ENCODE measurements at regions of chr17 and their contacts with region 1.

Region 1: GRCh38 chr17:1516388-1517161 is at the start of gene INPP5K:
- DNase-seq: peak; percentile 97 to 99 (median 98)
- H3K4me3 ChIP-seq: peak within 1 kb of the TSS; percentile 68 to 97
- H3K4me3 Mint-ChIP-seq: peak within 1 kb of the TSS; percentile 90 to 95 (median 92)
- H3K27ac ChIP-seq: peak within 1 kb of the TSS; percentile 89
- H3K27ac Mint-ChIP-seq: peak within 1 kb of the TSS; percentile 92 to 97 (median 95)
- H3K4me1 ChIP-seq: peaks cover 26% of the 10 kb centered on the region
- H3K4me1 Mint-ChIP-seq: peaks cover 15 to 43% (median 29%) of the 10 kb centered on the region in 4 donors
- H3K27me3 ChIP-seq: no peaks in the 10 kb centered on the region
- H3K27me3 Mint-ChIP-seq: no peaks in the 10 kb centered on the region
- total RNA-seq, gene INPP5K: 73.6 to 78.5 TPM

Region 2: DNA sequence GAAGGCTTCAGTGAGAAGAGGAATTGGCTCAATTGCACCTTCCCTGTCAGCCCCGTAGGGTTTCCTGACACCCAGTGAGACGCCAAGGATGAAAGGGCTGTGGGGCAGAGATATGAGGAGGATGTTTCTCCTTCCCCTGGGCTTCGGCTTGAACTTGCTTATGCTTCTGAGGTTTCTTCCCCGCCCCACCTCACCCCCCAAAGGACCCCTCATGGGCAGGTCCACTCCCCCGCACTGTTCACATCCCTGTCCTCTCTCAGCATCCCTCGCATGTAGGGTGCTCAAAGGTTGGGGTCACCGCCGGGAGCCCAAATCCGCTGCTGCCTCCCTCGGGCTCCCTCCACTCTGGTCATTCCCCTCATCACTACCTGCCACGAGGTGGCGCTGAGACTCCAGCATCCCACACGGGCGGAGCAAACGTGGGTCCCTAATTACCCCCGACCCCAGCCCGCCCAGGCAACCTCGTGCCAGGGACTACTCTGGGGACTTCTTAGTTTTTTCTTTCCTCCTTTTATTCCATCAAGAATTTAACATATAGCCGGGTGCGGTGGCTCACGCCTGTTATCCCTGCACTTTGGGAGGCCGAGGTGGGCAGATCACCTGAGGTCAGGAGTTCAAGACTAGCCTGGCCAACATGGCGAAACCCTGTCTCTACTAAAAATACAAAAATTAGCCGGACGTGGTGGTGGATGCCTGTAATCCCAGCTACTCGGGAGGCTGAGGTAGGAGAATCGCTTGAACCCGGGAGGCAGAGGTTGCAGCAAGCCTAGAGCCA is 240.4 kb before region 1 on chr17:
- CTCF ChIA-PET with region 1: no interaction called
- POLR2A ChIA-PET with region 1: no interaction called
- intact Hi-C with region 1: loop called (anchors 1 kb)
- DNase-seq: peak; percentile 60 to 72 (median 69)
- H3K4me3 ChIP-seq: no peak overlapping the region
- H3K4me3 Mint-ChIP-seq: peak overlapping the region in 4 of 8 donors; percentile 47 to 68 (median 62)
- H3K27ac ChIP-seq: no peak overlapping the region
- H3K27ac Mint-ChIP-seq: peak overlapping the region in 3 of 7 donors; percentile 13 to 88 (median 54)
- H3K4me1 ChIP-seq: peaks cover 5% of the 10 kb centered on the region
- H3K4me1 Mint-ChIP-seq: peaks cover 0 to 8% (median 4%) of the 10 kb centered on the region in 4 donors
- H3K27me3 ChIP-seq: no peaks in the 10 kb centered on the region
- H3K27me3 Mint-ChIP-seq: peaks cover 9 to 22% of the 10 kb centered on the region in 2 donors

Region 3: DNA sequence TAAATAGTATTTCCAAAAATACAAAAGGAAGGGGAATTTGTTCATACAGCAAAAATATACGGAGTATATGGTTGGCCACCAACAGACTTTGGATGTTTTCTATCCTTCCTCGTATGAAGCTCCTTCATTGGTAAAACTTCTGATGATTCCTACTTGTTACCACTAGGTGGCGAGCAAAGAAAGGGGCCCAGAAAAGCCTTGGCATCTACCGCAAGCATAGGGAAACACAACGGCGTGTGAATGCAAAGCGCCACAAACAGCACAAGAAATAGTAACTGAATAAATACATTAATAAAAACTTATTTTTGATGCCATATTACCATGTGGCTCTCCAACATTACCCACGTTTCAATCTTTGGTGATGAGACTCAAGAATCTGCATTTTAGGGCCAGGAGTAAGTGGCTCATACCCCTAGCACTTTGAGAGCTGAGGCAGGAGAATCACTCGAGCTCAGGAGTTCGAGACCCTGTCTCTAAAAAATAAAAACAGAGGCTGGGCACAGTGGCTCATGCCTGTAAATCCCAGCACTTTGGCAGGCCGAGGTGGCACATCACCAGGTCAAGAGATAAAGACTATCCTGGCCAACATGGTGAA is 151.0 kb before region 1 on chr17:
- CTCF ChIA-PET with region 1: interaction called, 211 read pairs
- POLR2A ChIA-PET with region 1: interaction called, 136 read pairs
- intact Hi-C with region 1: loop called (anchors 1 kb)
- DNase-seq: peak; percentile 74 to 80 (median 78)
- H3K4me3 ChIP-seq: no peak overlapping the region
- H3K4me3 Mint-ChIP-seq: peak overlapping the region in 3 of 8 donors; percentile 21 to 31 (median 26)
- H3K27ac ChIP-seq: peak overlapping the region; percentile 23
- H3K27ac Mint-ChIP-seq: peak overlapping the region; percentile 57 to 89 (median 76)
- H3K4me1 ChIP-seq: peaks cover 77% of the 10 kb centered on the region
- H3K4me1 Mint-ChIP-seq: peaks cover 40 to 79% (median 53%) of the 10 kb centered on the region in 4 donors
- H3K27me3 ChIP-seq: no peaks in the 10 kb centered on the region
- H3K27me3 Mint-ChIP-seq: no peaks in the 10 kb centered on the region

Region 4: DNA sequence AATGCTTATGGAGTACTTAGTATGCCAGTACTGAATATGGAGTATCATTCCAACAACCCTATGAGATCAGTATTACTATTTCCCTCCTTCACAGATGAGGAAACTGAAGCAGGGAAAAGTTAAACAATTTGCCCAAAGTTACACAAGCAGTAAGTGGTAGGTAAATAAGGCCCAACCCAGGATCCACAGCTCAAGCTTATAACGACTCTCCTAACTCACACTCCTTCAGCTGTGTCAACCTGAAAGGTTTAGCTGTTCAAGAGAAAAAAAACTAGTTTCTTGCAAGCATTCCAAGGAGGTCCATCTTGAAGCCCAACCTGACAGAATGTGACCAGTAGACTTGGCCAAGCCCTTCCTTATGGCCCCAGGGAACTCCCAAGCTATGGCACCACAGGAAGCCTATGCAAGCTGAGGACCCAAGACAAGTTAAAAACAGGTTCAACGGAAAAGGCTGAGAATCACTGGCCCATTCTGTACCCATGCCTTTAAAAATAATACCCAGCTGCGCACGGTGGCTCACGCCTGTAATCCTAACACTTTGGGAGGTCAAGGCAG is 67.1 kb before region 1 on chr17:
- CTCF ChIA-PET with region 1: interaction called, 12 read pairs
- POLR2A ChIA-PET with region 1: interaction called, 52 read pairs
- intact Hi-C with region 1: no loop called
- DNase-seq: no peak
- H3K4me3 ChIP-seq: no peak overlapping the region
- H3K4me3 Mint-ChIP-seq: no peak overlapping the region
- H3K27ac ChIP-seq: no peak overlapping the region
- H3K27ac Mint-ChIP-seq: peak overlapping the region in 3 of 7 donors; percentile 32 to 84 (median 52)
- H3K4me1 ChIP-seq: peaks cover 47% of the 10 kb centered on the region
- H3K4me1 Mint-ChIP-seq: peaks cover 34 to 83% (median 55%) of the 10 kb centered on the region in 4 donors
- H3K27me3 ChIP-seq: no peaks in the 10 kb centered on the region
- H3K27me3 Mint-ChIP-seq: no peaks in the 10 kb centered on the region

Region 5: GRCh38 chr17:1488030-1488863 is 28.3 kb before region 1 on chr17:
- CTCF ChIA-PET with region 1: interaction called, 4 read pairs
- POLR2A ChIA-PET with region 1: interaction called, 56 read pairs
- intact Hi-C with region 1: loop called (anchors 1 kb)
- DNase-seq: peak; percentile 66 to 78 (median 71)
- H3K4me3 ChIP-seq: peak overlapping the region; percentile 27 to 54
- H3K4me3 Mint-ChIP-seq: peak overlapping the region; percentile 82 to 91 (median 88)
- H3K27ac ChIP-seq: peak overlapping the region; percentile 72
- H3K27ac Mint-ChIP-seq: peak overlapping the region; percentile 37 to 97 (median 88)
- H3K4me1 ChIP-seq: peaks cover 56% of the 10 kb centered on the region
- H3K4me1 Mint-ChIP-seq: peaks cover 19 to 65% (median 41%) of the 10 kb centered on the region in 4 donors
- H3K27me3 ChIP-seq: no peaks in the 10 kb centered on the region
- H3K27me3 Mint-ChIP-seq: no peaks in the 10 kb centered on the region

Region 6: GRCh38 chr17:1561400-1562175 is 45.0 kb after region 1 on chr17:
- CTCF ChIA-PET with region 1: interaction called, 5 read pairs
- POLR2A ChIA-PET with region 1: interaction called, 14 read pairs
- intact Hi-C with region 1: loop called (anchors 1 kb)
- DNase-seq: peak in 4 of 5 donors; percentile 32 to 44 (median 36)
- H3K4me3 ChIP-seq: peak overlapping the region; percentile 2 to 17
- H3K4me3 Mint-ChIP-seq: peak overlapping the region; percentile 78 to 89 (median 85)
- H3K27ac ChIP-seq: peak overlapping the region; percentile 59
- H3K27ac Mint-ChIP-seq: peak overlapping the region; percentile 71 to 93 (median 89)
- H3K4me1 ChIP-seq: peaks cover 39% of the 10 kb centered on the region
- H3K4me1 Mint-ChIP-seq: peaks cover 29 to 53% (median 41%) of the 10 kb centered on the region in 4 donors
- H3K27me3 ChIP-seq: no peaks in the 10 kb centered on the region
- H3K27me3 Mint-ChIP-seq: no peaks in the 10 kb centered on the region

Region 7: GRCh38 chr17:2532146-2532720 is 1015.7 kb after region 1 on chr17:
- CTCF ChIA-PET with region 1: no interaction called
- POLR2A ChIA-PET with region 1: no interaction called
- intact Hi-C with region 1: no loop called
- DNase-seq: no peak
- H3K4me3 ChIP-seq: no peak overlapping the region
- H3K4me3 Mint-ChIP-seq: no peak overlapping the region
- H3K27ac ChIP-seq: no peak overlapping the region
- H3K27ac Mint-ChIP-seq: no peak overlapping the region
- H3K4me1 ChIP-seq: peaks cover 6% of the 10 kb centered on the region
- H3K4me1 Mint-ChIP-seq: peaks cover 6 to 10% (median 8%) of the 10 kb centered on the region in 4 donors
- H3K27me3 ChIP-seq: no peaks in the 10 kb centered on the region
- H3K27me3 Mint-ChIP-seq: no peaks in the 10 kb centered on the region